K562 (cell line): ENCODE measurements at regions of chr21 and their contacts with region 1.

Region 1: GRCh38 chr21:43938751-43939442 is 73.2 kb upstream of the TRAPPC10 start:
- DNase-seq: peak; percentile 95 to 99 (median 98)
- ATAC-seq: peak; percentile 96
- H3K4me3 ChIP-seq: peak overlapping the region; percentile 23
- H3K27ac ChIP-seq: peak overlapping the region; percentile 68
- H3K4me1 ChIP-seq: peaks cover 20 to 78% of the 10 kb centered on the region in 2 experiments; a peak in 4 of 5 replicates
- H3K27me3 ChIP-seq: no peaks in the 10 kb centered on the region
- CTCF ChIP-seq: peak; percentile 100
- EP300 ChIP-seq: peak; percentile 73
- POLR2A ChIP-seq: no peak
- RAD21 ChIP-seq: peak; percentile 97 to 98

Region 2: GRCh38 chr21:43893536-43894205 is 45.2 kb before region 1 on chr21:
- CTCF ChIA-PET with region 1: no interaction called
- POLR2A ChIA-PET with region 1: interaction called, 3 read pairs
- in situ Hi-C with region 1: no loop called
- intact Hi-C with region 1: loop called (anchors 5 kb)
- DNase-seq: peak in 2 of 4 experiments; percentile 22 to 79
- ATAC-seq: peak; percentile 77
- H3K4me3 ChIP-seq: peak overlapping the region; percentile 6; the same call in 1 of the 2 replicates
- H3K27ac ChIP-seq: peak overlapping the region; percentile 75
- H3K4me1 ChIP-seq: peaks cover 25 to 30% of the 10 kb centered on the region in 2 experiments
- H3K27me3 ChIP-seq: no peaks in the 10 kb centered on the region
- CTCF ChIP-seq: no peak
- EP300 ChIP-seq: peak; percentile 5; the same call in 1 of the 2 replicates
- POLR2A ChIP-seq: 0 out of 2 replicates have a peak, but pooled peaks have one; percentile 27
- RAD21 ChIP-seq: no peak